Dendritic cell treated with granulocyte-macrophage colony-stimulating factor and Interleukin-4, amounts not matched to agents 40 ng/mL and 50 ng/mL, for 4 days (primary cell): ENCODE measurements at regions of chr1 and their contacts with region 1.

Region 1: GRCh38 chr1:71448326-71449010 is 367.6 kb upstream of the ZRANB2 start:
- H3K4me3 Mint-ChIP-seq: no peak overlapping the region
- H3K27ac Mint-ChIP-seq: no peak overlapping the region
- H3K4me1 Mint-ChIP-seq: no peaks in the 10 kb centered on the region
- H3K27me3 Mint-ChIP-seq: no peaks in the 10 kb centered on the region

Region 2: GRCh38 chr1:71473331-71473730 is 24.9 kb after region 1 on chr1:
- intact Hi-C with region 1: loop called (anchors 2 kb)
- H3K4me3 Mint-ChIP-seq: no peak overlapping the region
- H3K27ac Mint-ChIP-seq: no peak overlapping the region
- H3K4me1 Mint-ChIP-seq: no peaks in the 10 kb centered on the region
- H3K27me3 Mint-ChIP-seq: no peaks in the 10 kb centered on the region